ENCODE measurements at regions of chr9 and their contacts with region 1.

Region 1: DNA sequence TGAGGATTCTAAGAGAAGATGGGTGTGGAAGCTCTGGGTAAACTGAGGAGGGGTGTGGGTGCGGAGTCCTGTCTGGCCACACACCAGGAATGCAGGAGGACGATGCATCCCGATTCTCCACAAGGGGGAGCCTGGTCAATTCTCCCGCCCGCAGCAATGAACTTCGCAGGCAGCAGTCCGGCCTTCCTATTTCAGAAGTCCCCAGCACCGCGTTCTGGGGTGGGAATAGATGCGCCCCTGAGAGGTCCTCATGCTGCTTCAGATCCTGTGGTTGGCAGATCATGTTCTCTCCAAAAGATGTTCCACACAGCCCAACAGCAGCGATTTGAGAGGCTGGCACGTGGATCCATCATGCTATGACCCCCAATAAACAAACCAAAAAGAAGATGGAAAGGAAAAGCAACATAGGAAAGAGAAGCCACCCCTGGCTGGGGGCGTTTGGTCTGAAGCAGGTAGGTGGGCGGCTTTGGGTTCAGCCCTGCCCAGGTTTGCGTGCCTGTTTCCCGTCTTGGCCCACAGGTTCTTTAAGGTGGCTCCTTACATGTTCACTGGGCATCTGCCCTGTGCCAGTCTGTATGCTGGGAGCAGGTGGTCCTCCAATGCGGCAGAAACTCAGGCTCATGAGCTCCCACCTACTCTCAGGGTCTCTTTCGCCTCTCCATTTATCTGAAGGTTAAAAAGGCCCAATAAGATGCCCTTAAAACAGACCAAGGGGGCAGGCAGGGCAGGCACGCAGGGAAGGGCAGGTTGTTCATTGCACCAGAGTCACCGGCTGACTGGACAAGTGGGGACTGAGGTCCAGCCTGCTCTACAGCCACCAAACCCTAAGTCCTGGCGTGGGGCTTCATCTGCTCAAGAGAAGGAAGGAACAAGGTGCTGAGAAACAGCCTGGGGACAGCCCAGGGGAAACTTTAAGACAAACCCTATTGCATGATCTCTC is 171.6 kb downstream of the PAX5 start:
- DNase-seq: peak; percentile 55 to 60
- ATAC-seq: peak; percentile 85 to 88
- H3K4me3 ChIP-seq: no peak overlapping the region
- H3K27ac ChIP-seq: no peak overlapping the region
- H3K4me1 ChIP-seq: no peaks in the 10 kb centered on the region; the same call in 2 of the 3 replicates
- CTCF ChIP-seq: peak; percentile 66
- EP300 ChIP-seq: no peak
- POLR2A ChIP-seq: no peak
- RAD21 ChIP-seq: peak; percentile 56 to 57

Region 2: DNA sequence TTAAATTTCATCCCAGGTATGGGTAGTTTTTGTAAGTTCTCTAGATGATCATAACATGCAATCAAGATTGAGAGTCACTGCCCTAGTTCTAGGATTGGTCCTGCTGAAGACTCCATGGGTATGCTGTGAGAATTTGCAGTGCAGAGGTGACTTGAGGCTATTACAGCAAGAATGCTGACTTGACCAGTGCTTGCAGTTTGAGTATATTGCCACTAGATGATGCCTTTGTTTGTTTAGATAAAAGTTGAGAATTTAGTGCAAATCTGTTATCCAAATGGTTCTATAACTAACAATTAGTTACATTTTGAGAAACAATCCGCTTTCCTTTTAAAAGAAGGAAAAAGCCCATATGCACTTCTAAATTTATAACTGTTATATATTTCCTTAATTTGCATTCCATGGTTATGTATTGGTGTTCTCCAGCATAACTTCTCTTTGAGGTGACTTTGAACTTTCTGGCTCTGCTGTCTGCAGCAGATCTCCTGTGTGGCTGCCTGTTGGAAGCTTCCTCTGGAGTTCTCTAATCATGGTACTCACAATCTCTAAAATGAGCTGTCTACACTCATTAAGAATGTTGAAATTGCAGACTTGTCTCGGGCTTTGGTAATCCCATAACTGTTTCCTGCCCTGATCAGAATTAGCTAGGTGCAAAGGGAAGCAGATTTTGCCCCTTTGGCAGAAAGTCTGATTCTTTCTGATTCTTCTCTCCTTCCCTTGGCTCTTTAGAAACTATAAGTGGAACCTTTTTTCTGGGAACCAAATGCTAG is 264.9 kb before region 1 on chr9:
- CTCF ChIA-PET with region 1: no interaction called
- POLR2A ChIA-PET with region 1: no interaction called
- DNase-seq: peak; percentile 73 to 78
- ATAC-seq: peak; percentile 97 to 99
- H3K4me3 ChIP-seq: no peak overlapping the region
- H3K27ac ChIP-seq: no peak overlapping the region
- H3K4me1 ChIP-seq: no peaks in the 10 kb centered on the region
- CTCF ChIP-seq: peak; percentile 57
- EP300 ChIP-seq: no peak
- POLR2A ChIP-seq: no peak
- RAD21 ChIP-seq: peak; percentile 18 to 27; a peak in 2 of 5 replicates

Region 3: GRCh38 chr9:36798350-36799065 is 64.0 kb before region 1 on chr9:
- CTCF ChIA-PET with region 1: interaction called, 95 read pairs
- POLR2A ChIA-PET with region 1: no interaction called
- DNase-seq: peak; percentile 35 to 76
- ATAC-seq: peak; percentile 72 to 90
- H3K4me3 ChIP-seq: no peak overlapping the region
- H3K27ac ChIP-seq: no peak overlapping the region
- H3K4me1 ChIP-seq: 0 out of 3 replicates have a peak, but pooled peaks cover 5% of the 10 kb centered on the region
- CTCF ChIP-seq: peak; percentile 56
- EP300 ChIP-seq: no peak
- POLR2A ChIP-seq: no peak
- RAD21 ChIP-seq: peak; percentile 70 to 81

Region 4: GRCh38 chr9:36833954-36834353 is 28.5 kb before region 1 on chr9:
- CTCF ChIA-PET with region 1: interaction called, 13 read pairs
- POLR2A ChIA-PET with region 1: no interaction called
- DNase-seq: no peak
- ATAC-seq: peak in 1 of 2 experiments; percentile 55; a peak in 2 of 6 replicates
- H3K4me3 ChIP-seq: no peak overlapping the region
- H3K27ac ChIP-seq: no peak overlapping the region
- H3K4me1 ChIP-seq: no peaks in the 10 kb centered on the region
- CTCF ChIP-seq: no peak
- EP300 ChIP-seq: no peak
- POLR2A ChIP-seq: no peak
- RAD21 ChIP-seq: no peak

Region 5: DNA sequence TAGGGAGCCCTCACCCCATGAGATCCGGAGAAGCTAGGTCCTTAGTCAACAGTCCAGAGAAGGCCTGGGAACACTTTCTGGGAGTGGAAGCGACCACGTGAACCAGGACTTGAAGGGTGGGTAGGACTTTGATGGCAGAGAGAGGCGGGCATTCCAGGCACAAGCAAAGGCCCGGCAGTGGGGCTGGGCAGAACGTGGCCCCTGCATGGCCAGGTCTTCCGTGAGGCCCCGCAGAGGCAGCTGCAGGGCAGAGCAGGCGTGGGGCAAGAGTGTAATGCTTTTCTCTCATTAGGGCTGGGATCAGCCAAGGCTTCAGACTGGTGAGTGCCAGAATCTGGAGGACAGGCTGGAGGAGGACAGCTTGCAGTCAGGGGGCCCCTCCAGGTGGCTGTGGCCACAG is 12.5 kb before region 1 on chr9:
- CTCF ChIA-PET with region 1: interaction called, 38 read pairs
- POLR2A ChIA-PET with region 1: no interaction called
- DNase-seq: no peak
- ATAC-seq: no peak
- H3K4me3 ChIP-seq: no peak overlapping the region
- H3K27ac ChIP-seq: no peak overlapping the region
- H3K4me1 ChIP-seq: no peaks in the 10 kb centered on the region
- CTCF ChIP-seq: no peak
- EP300 ChIP-seq: no peak
- POLR2A ChIP-seq: no peak
- RAD21 ChIP-seq: no peak

Region 6: GRCh38 chr9:36974731-36975130 is 112.3 kb after region 1 on chr9:
- CTCF ChIA-PET with region 1: interaction called, 24 read pairs
- POLR2A ChIA-PET with region 1: no interaction called
- DNase-seq: peak in 1 of 2 experiments; percentile 27
- ATAC-seq: peak; percentile 75 to 83; a peak in 5 of 6 replicates
- H3K4me3 ChIP-seq: no peak overlapping the region
- H3K27ac ChIP-seq: no peak overlapping the region
- H3K4me1 ChIP-seq: peaks cover 14% of the 10 kb centered on the region; the same call in 2 of the 3 replicates
- CTCF ChIP-seq: peak; percentile 41; the same call in 2 of the 3 replicates
- EP300 ChIP-seq: no peak
- POLR2A ChIP-seq: no peak
- RAD21 ChIP-seq: peak; percentile 59 to 62

Region 7: GRCh38 chr9:37329576-37329975 is 467.1 kb after region 1 on chr9:
- CTCF ChIA-PET with region 1: interaction called, 13 read pairs
- POLR2A ChIA-PET with region 1: no interaction called
- DNase-seq: peak; percentile 17 to 68
- ATAC-seq: peak; percentile 64 to 66; a peak in 3 of 6 replicates
- H3K4me3 ChIP-seq: no peak overlapping the region
- H3K27ac ChIP-seq: no peak overlapping the region
- H3K4me1 ChIP-seq: peaks cover 17% of the 10 kb centered on the region; the same call in 2 of the 3 replicates
- CTCF ChIP-seq: peak; percentile 75
- EP300 ChIP-seq: no peak
- POLR2A ChIP-seq: no peak
- RAD21 ChIP-seq: peak; percentile 83